GM12878 (cell line): ENCODE measurements at regions of chr13 and their contacts with region 1.

Region 1: GRCh38 chr13:75512253-75512652 is 25.4 kb downstream of the COMMD6 start:
- DNase-seq: peak; percentile 80
- ATAC-seq: peak; percentile 93
- H3K4me3 ChIP-seq: no peak overlapping the region
- H3K27ac ChIP-seq: no peak overlapping the region
- H3K4me1 ChIP-seq: peaks cover 40% of the 10 kb centered on the region
- H3K27me3 ChIP-seq: no peaks in the 10 kb centered on the region
- CTCF ChIP-seq: no peak
- EP300 ChIP-seq: peak in 1 of 2 experiments; percentile 20; a peak in 1 of 4 replicates
- POLR2A ChIP-seq: no peak
- RAD21 ChIP-seq: no peak

Region 2: GRCh38 chr13:74891610-74892009 is 620.6 kb before region 1 on chr13:
- CTCF ChIA-PET with region 1: no interaction called
- POLR2A ChIA-PET with region 1: no interaction called
- RAD21 ChIA-PET with region 1: no interaction called
- SMC1A ChIA-PET with region 1: no interaction called
- in situ Hi-C with region 1: no loop called
- intact Hi-C with region 1: no loop called
- DNase-seq: no peak
- ATAC-seq: no peak
- H3K4me3 ChIP-seq: no peak overlapping the region
- H3K27ac ChIP-seq: no peak overlapping the region
- H3K4me1 ChIP-seq: no peaks in the 10 kb centered on the region
- H3K27me3 ChIP-seq: no peaks in the 10 kb centered on the region
- CTCF ChIP-seq: no peak
- EP300 ChIP-seq: no peak
- POLR2A ChIP-seq: no peak
- RAD21 ChIP-seq: no peak

Region 3: GRCh38 chr13:75236774-75237173 is 275.5 kb before region 1 on chr13:
- CTCF ChIA-PET with region 1: no interaction called
- POLR2A ChIA-PET with region 1: no interaction called
- RAD21 ChIA-PET with region 1: no interaction called
- SMC1A ChIA-PET with region 1: no interaction called
- in situ Hi-C with region 1: no loop called
- intact Hi-C with region 1: no loop called
- DNase-seq: no peak
- ATAC-seq: no peak
- H3K4me3 ChIP-seq: no peak overlapping the region
- H3K27ac ChIP-seq: no peak overlapping the region
- H3K4me1 ChIP-seq: no peaks in the 10 kb centered on the region
- H3K27me3 ChIP-seq: no peaks in the 10 kb centered on the region
- CTCF ChIP-seq: no peak
- EP300 ChIP-seq: no peak
- POLR2A ChIP-seq: no peak
- RAD21 ChIP-seq: no peak

Region 4: DNA sequence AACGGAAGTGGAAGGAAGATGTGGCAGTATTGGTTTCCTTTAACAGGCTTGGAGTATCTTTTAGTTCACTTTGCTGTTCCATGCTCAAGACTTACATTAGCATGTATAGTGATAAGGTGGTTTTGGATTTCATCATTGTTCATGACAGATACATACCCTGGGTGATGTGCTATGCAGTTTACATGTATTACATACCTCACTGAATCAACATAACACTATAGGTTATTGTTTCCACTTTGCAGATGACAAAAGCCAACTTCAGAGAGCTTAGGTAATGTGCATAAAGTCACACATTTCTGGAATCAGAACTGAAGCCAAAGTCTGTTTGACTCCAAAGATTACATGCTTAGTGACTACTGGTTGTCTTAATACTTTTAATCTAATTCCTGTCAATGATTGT is 18.3 kb after region 1 on chr13:
- CTCF ChIA-PET with region 1: interaction called, 3 read pairs
- POLR2A ChIA-PET with region 1: interaction called, 3 read pairs
- RAD21 ChIA-PET with region 1: interaction called, 4 read pairs
- SMC1A ChIA-PET with region 1: interaction called, 9 read pairs
- in situ Hi-C with region 1: no loop called
- intact Hi-C with region 1: loop called (anchors 2 kb)
- DNase-seq: no peak
- ATAC-seq: peak; percentile 75
- H3K4me3 ChIP-seq: no peak overlapping the region
- H3K27ac ChIP-seq: no peak overlapping the region
- H3K4me1 ChIP-seq: peaks cover 5% of the 10 kb centered on the region; the same call in 1 of the 2 replicates
- H3K27me3 ChIP-seq: no peaks in the 10 kb centered on the region
- CTCF ChIP-seq: no peak
- EP300 ChIP-seq: no peak
- POLR2A ChIP-seq: no peak
- RAD21 ChIP-seq: no peak